Ascending aorta (tissue), 2 donors: ENCODE measurements at regions of chr4 and their contacts with region 1.

Region 1: GRCh38 chr4:81405894-81406401 is 65.8 kb downstream of the RASGEF1B start:
- DNase-seq: no peak
- H3K4me3 ChIP-seq: peak overlapping the region; percentile 4 to 35
- H3K27ac ChIP-seq: no peak overlapping the region
- H3K4me1 ChIP-seq: peaks cover 0 to 3% of the 10 kb centered on the region in 2 donors
- H3K27me3 ChIP-seq: no peaks in the 10 kb centered on the region
- CTCF ChIP-seq: peak; percentile 55 to 76 (median 73)

Region 2: GRCh38 chr4:81375745-81376144 is 30.2 kb before region 1 on chr4:
- intact Hi-C with region 1: no loop called
- DNase-seq: no peak
- H3K4me3 ChIP-seq: no peak overlapping the region
- H3K27ac ChIP-seq: no peak overlapping the region
- H3K4me1 ChIP-seq: no peaks in the 10 kb centered on the region
- H3K27me3 ChIP-seq: no peaks in the 10 kb centered on the region
- CTCF ChIP-seq: no peak

Region 3: DNA sequence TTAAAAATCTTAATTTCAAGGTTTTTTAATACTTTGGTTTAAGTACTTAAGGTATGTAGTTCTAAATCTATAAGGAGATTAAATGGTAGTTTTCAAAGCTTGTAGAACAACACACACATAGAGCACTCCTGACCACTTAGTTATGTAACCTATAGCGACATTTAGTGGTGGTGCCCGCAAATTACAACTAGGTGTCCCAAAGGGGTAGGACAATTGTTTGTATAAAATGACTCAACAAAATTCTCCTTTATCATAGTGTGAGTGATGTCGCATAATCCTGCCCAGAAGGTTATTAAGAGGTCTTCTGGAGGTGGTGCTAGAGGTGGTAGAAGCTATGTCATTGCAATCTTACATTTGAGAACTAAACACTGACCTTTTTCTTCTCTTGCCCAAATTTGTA is 438.8 kb after region 1 on chr4:
- intact Hi-C with region 1: loop called (anchors 2 kb)
- DNase-seq: peak in 1 of 2 donors; percentile 87
- H3K4me3 ChIP-seq: no peak overlapping the region
- H3K27ac ChIP-seq: no peak overlapping the region
- H3K4me1 ChIP-seq: no peaks in the 10 kb centered on the region
- H3K27me3 ChIP-seq: no peaks in the 10 kb centered on the region
- CTCF ChIP-seq: peak; percentile 49 to 70 (median 69)

Region 4: DNA sequence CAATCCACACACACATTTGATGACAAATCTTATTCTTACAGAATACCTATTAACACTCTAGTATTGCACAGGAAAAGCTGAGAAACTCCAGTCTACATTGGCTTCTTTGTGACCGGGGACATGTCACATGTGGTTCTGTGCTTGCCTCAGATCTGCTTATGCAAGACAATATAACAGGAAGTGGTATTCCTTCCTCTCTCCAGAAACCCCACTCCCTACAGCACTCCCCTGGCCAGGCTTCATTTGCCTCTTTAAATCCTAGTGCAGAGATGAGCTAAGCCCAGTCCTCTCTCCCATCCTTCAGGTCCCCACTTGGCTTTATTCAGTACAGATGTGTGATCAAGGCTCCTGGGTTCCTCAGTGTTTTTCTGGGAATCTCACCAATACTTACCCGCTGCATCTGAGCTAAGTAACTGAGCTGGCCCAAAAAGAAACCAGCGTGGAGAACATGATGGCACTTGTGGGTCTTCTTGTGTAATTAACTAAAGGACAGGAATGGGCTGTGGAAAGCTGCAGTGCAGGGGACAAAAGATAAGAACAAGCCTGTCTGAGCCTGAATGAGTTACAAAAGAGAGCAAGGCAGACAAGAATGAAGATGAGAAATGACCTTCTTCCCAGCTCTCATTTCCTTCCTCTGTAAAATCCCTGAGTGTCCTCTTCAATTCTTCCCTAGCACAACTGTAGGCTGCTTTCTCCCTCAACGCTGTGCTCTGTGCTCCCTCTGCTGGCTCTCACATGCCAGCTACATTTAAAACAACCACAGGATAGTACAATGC is 862.3 kb after region 1 on chr4:
- intact Hi-C with region 1: loop called (anchors 1 kb)
- DNase-seq: peak in 1 of 2 donors; percentile 69
- H3K4me3 ChIP-seq: no peak overlapping the region
- H3K27ac ChIP-seq: no peak overlapping the region
- H3K4me1 ChIP-seq: no peaks in the 10 kb centered on the region
- H3K27me3 ChIP-seq: no peaks in the 10 kb centered on the region
- CTCF ChIP-seq: peak; percentile 33 to 74 (median 60)